Common myeloid progenitor, CD34-positive (primary cell): ENCODE measurements at regions of chr1 and their contacts with region 1.

Region 1: DNA sequence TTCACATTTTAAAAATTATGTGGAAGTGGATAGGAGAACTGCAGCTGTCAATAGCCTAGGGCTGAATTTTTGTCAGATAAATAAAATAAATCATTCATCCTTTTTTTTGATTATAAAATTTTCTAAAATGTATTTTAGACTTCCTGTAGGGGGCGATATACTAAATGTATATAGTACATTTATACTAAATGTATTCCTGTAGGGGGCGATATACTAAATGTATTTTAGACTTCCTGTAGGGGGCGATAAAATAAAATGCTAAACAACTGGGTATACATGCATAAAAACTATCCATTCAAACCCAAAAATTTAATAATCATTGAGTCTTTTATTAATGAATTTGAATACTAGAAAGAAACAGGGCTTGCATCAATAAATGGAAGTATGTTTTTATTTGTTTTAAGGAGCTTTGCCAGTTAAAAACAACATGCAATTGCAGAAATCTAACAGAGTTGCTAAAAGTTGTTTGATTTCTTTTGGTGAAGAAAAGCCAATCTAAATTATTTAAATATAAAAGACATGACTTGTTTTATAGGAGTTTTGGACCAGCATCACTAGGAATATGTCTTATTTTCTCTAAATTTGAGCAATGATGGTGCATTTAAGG is 31.4 kb downstream of the CLCA1 start:
- DNase-seq: peak; percentile 39 to 67 (median 61)
- H3K4me3 ChIP-seq: no peak overlapping the region
- H3K27ac ChIP-seq: no peak overlapping the region
- H3K4me1 ChIP-seq: peaks cover 0 to 28% (median 20%) of the 10 kb centered on the region in 4 experiments
- H3K27me3 ChIP-seq: no peaks in the 10 kb centered on the region

Region 2: DNA sequence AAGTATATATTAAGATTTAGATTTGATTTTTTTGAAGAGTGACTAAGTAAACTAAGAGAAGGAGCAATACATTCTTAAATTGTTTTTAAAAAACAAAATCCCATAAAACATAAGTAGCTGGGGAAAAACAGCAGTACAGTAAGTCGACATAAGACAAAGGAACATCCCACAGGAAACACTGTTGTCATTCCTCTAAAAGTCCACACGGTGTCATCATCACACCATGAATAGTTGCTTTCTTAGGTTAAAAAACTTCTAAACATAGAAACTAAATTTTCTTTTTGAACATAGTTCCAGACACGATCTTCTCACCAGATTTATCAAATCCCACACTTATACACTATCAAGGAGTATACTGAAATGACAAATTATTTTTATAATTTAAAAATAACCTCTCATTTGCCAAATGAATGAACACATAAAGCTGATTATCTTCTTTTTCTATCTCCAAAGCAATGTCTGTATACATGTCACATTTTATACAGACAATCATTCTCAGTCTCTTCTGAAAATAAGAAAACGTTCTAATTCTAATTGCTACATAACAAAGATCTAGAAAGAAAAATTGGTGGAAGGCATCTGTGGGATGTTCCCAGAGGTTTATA is 119.7 kb before region 1 on chr1:
- CTCF ChIA-PET with region 1: interaction called, 17 read pairs
- POLR2A ChIA-PET with region 1: no interaction called
- DNase-seq: peak; percentile 74 to 85 (median 82)
- H3K4me3 ChIP-seq: no peak overlapping the region
- H3K27ac ChIP-seq: no peak overlapping the region
- H3K4me1 ChIP-seq: peaks cover 0 to 4% (median 4%) of the 10 kb centered on the region in 4 experiments
- H3K27me3 ChIP-seq: no peaks in the 10 kb centered on the region

Region 3: DNA sequence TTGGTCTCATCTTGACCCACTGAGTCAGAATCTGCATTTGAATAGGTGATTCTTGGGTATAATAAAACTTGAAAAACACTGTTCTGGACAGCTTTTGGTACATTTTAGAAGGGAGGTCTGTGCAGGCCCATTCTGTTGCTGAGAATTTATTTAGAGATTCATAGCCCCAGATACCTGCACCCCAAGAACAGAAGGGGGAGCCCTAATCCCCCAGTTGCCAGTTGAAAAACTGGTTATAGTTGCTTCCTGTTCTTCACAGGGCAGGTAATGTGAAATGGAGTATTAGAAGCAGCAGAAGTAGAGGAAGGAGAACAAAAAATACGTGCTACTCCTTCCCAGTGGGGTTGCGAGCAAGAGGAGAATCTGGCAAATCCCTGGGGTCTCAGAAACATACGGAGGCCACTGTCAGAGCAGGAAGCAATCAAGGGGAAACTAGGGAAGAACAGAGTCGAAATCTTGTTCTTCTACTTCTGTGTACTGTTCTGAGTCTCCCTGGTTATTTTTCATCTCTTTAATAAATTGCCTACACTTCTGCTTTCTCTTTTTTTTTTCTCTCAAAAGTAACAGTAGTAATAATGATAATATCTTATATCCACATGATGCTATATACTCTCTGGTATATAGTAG is 80.7 kb before region 1 on chr1:
- CTCF ChIA-PET with region 1: interaction called, 48 read pairs
- POLR2A ChIA-PET with region 1: no interaction called
- DNase-seq: peak; percentile 58 to 83 (median 81)
- H3K4me3 ChIP-seq: peak overlapping the region in 4 of 7 experiments; percentile 19 to 61 (median 56)
- H3K27ac ChIP-seq: peak overlapping the region in 1 of 2 experiments; percentile 29
- H3K4me1 ChIP-seq: peaks cover 3 to 7% (median 4%) of the 10 kb centered on the region in 4 experiments
- H3K27me3 ChIP-seq: no peaks in the 10 kb centered on the region

Region 4: DNA sequence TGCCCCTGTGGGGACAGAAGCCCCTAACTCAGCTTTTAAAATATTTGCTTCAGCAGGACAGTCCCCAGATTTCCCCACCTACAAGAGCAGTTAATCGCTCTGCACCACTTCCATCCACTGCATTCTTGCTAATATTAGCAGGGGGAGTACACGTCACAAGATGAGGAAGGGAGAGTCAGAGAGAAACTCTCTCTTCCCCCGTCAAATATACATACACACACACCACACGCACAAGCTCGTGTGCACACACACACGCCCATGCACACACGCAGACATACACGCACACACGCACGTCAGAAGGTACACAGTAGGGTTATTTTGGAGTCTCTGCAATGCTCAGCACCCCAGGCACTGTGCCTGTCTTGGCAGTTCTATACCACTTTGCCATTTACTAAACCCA is 29.2 kb before region 1 on chr1:
- CTCF ChIA-PET with region 1: interaction called, 16 read pairs
- POLR2A ChIA-PET with region 1: no interaction called
- DNase-seq: no peak
- H3K4me3 ChIP-seq: no peak overlapping the region
- H3K27ac ChIP-seq: no peak overlapping the region
- H3K4me1 ChIP-seq: peaks cover 0 to 16% (median 4%) of the 10 kb centered on the region in 4 experiments
- H3K27me3 ChIP-seq: no peaks in the 10 kb centered on the region

Region 5: DNA sequence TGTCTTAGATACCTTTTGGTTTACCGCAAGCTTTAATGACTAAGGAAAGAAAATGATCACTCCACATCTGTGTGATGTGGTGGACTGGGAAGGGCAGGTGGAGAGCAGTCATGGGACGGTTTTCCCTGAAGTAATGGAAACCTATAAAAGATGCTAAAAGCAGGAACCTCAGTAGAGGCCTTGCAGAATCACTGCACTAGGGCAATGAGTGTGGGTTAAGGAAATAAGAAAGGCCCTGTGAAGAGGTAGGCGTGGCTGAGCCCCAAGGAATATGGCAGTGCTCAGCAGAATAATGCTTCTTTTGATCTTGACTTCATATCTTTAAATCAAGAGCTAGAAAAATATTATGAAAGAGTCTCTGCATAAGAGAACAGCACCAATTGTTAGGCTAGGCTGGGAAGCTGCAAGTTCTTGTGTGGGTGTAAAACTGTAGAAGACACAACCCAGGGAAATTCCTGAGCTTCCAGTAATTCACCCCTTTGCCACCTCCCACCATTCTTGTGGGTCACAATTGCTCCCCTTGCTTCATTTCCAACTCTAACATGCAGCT is 96.7 kb after region 1 on chr1:
- CTCF ChIA-PET with region 1: no interaction called
- POLR2A ChIA-PET with region 1: no interaction called
- DNase-seq: no peak
- H3K4me3 ChIP-seq: no peak overlapping the region
- H3K27ac ChIP-seq: no peak overlapping the region
- H3K4me1 ChIP-seq: no peaks in the 10 kb centered on the region
- H3K27me3 ChIP-seq: no peaks in the 10 kb centered on the region